B cell (primary cell): ENCODE measurements at regions of chr11 and their contacts with region 1.

Region 1: DNA sequence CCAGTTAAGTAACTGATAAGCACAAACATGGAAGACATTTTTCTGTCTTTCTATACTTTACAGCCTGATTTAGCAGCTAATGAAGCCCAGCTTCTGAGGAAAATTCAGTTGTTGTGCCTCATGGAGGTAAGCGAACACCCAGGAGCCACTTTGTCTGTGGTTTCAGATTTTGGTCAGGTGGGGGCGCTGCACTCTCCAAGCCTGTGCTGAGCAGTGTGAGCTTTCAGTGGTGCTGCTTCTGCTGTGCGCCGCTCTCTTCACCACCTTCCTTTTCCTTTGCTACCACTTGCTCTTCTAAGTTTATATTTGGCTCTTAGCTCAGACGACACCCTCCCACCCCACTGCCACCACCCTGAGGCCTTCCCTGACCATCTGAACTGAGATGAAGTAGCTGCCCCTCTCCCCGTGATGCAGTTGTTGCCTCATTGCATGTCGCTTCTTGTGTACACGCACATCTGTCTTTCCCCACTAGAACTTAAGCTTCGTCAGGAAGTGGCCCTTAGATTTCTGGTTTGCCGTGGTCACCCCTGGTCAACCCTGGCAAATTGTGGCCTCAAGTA is 14.0 kb downstream of the PSMD13 start:
- DNase-seq: peak; percentile 84
- ATAC-seq: peak; percentile 89
- H3K4me3 ChIP-seq: no peak overlapping the region
- H3K4me3 Mint-ChIP-seq: no peak overlapping the region
- H3K27ac ChIP-seq: no peak overlapping the region
- H3K27ac Mint-ChIP-seq: no peak overlapping the region
- H3K4me1 ChIP-seq: peaks cover 0 to 5% of the 10 kb centered on the region in 2 donors
- H3K4me1 Mint-ChIP-seq: peaks cover 7% of the 10 kb centered on the region
- H3K27me3 ChIP-seq: no peaks in the 10 kb centered on the region
- H3K27me3 Mint-ChIP-seq: no peaks in the 10 kb centered on the region
- CTCF ChIP-seq: peak; percentile 79

Region 2: GRCh38 chr11:269146-269890 is 18.5 kb after region 1 on chr11:
- CTCF ChIA-PET with region 1: interaction called, 49 read pairs
- POLR2A ChIA-PET with region 1: interaction called, 7 read pairs
- intact Hi-C with region 1: loop called (anchors 2 kb)
- DNase-seq: peak; percentile 96
- ATAC-seq: peak; percentile 66
- H3K4me3 ChIP-seq: peak overlapping the region; percentile 62 to 85 (median 72)
- H3K4me3 Mint-ChIP-seq: peak overlapping the region; percentile 91
- H3K27ac ChIP-seq: peak overlapping the region; percentile 96 to 98
- H3K27ac Mint-ChIP-seq: peak overlapping the region; percentile 94
- H3K4me1 ChIP-seq: peaks cover 25 to 32% of the 10 kb centered on the region in 2 donors
- H3K4me1 Mint-ChIP-seq: peaks cover 34% of the 10 kb centered on the region
- H3K27me3 ChIP-seq: no peaks in the 10 kb centered on the region
- H3K27me3 Mint-ChIP-seq: no peaks in the 10 kb centered on the region
- CTCF ChIP-seq: peak; percentile 33

Region 3: GRCh38 chr11:299951-300735 is 49.3 kb after region 1 on chr11:
- CTCF ChIA-PET with region 1: interaction called, 51 read pairs
- POLR2A ChIA-PET with region 1: no interaction called
- intact Hi-C with region 1: no loop called
- DNase-seq: no peak
- ATAC-seq: peak; percentile 28
- H3K4me3 ChIP-seq: no peak overlapping the region
- H3K4me3 Mint-ChIP-seq: no peak overlapping the region
- H3K27ac ChIP-seq: no peak overlapping the region
- H3K27ac Mint-ChIP-seq: peak overlapping the region; percentile 26
- H3K4me1 ChIP-seq: peaks cover 15 to 27% of the 10 kb centered on the region in 2 donors
- H3K4me1 Mint-ChIP-seq: peaks cover 28% of the 10 kb centered on the region
- H3K27me3 ChIP-seq: peaks cover 0 to 15% (median 1%) of the 10 kb centered on the region in 4 experiments
- H3K27me3 Mint-ChIP-seq: peaks cover 7% of the 10 kb centered on the region
- CTCF ChIP-seq: no peak

Region 4: GRCh38 chr11:326842-327580 is 76.2 kb after region 1 on chr11:
- CTCF ChIA-PET with region 1: interaction called, 23 read pairs
- POLR2A ChIA-PET with region 1: no interaction called
- intact Hi-C with region 1: no loop called
- DNase-seq: peak; percentile 87
- ATAC-seq: peak; percentile 74
- H3K4me3 ChIP-seq: peak overlapping the region in 4 of 5 experiments; percentile 21 to 34 (median 26)
- H3K4me3 Mint-ChIP-seq: peak overlapping the region; percentile 66
- H3K27ac ChIP-seq: peak overlapping the region; percentile 95 to 96
- H3K27ac Mint-ChIP-seq: peak overlapping the region; percentile 95
- H3K4me1 ChIP-seq: peaks cover 34 to 55% of the 10 kb centered on the region in 2 donors
- H3K4me1 Mint-ChIP-seq: peaks cover 54% of the 10 kb centered on the region
- H3K27me3 ChIP-seq: no peaks in the 10 kb centered on the region
- H3K27me3 Mint-ChIP-seq: no peaks in the 10 kb centered on the region
- CTCF ChIP-seq: no peak

Region 5: GRCh38 chr11:363948-364761 is 113.3 kb after region 1 on chr11:
- CTCF ChIA-PET with region 1: interaction called, 52 read pairs
- POLR2A ChIA-PET with region 1: interaction called, 3 read pairs
- intact Hi-C with region 1: loop called (anchors 2 kb)
- DNase-seq: peak; percentile 65
- ATAC-seq: peak; percentile 83
- H3K4me3 ChIP-seq: no peak overlapping the region
- H3K4me3 Mint-ChIP-seq: no peak overlapping the region
- H3K27ac ChIP-seq: no peak overlapping the region
- H3K27ac Mint-ChIP-seq: no peak overlapping the region
- H3K4me1 ChIP-seq: peaks cover 8 to 14% of the 10 kb centered on the region in 2 donors
- H3K4me1 Mint-ChIP-seq: peaks cover 11% of the 10 kb centered on the region
- H3K27me3 ChIP-seq: peaks cover 0 to 38% (median 15%) of the 10 kb centered on the region in 4 experiments
- H3K27me3 Mint-ChIP-seq: peaks cover 24% of the 10 kb centered on the region
- CTCF ChIP-seq: peak; percentile 69

Region 6: DNA sequence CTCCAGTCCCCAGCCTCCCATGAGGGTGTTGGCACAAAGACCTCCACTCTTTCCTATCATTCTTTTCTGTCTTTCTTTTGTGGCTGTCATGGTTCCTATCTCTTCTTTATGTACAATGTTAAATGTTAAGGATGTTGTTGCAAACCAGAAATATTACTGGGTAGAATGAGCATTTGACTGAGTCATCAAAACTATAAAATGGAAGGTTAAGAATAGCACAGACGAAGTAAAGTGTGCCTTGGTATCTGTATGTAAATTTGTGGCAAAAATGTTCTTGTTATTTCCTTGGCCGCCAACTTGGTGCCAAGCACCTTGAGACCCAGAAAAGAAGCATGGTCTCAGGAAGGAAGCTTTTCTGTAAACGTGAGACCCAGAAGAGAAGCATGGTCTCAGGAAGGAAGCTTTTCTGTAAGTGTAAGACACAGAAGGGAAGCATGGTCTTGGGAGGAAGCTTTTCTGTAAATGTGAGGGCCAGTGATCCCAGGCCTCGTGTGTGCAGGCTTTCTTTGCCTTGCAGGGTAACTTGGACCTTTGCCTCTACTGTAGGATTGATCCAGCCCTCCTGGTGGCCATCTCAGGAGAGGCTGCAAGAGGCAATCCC is 136.5 kb after region 1 on chr11:
- CTCF ChIA-PET with region 1: no interaction called
- POLR2A ChIA-PET with region 1: no interaction called
- intact Hi-C with region 1: no loop called
- DNase-seq: no peak
- ATAC-seq: no peak
- H3K4me3 ChIP-seq: no peak overlapping the region
- H3K4me3 Mint-ChIP-seq: no peak overlapping the region
- H3K27ac ChIP-seq: no peak overlapping the region
- H3K27ac Mint-ChIP-seq: no peak overlapping the region
- H3K4me1 ChIP-seq: no peaks in the 10 kb centered on the region
- H3K4me1 Mint-ChIP-seq: peaks cover 3% of the 10 kb centered on the region
- H3K27me3 ChIP-seq: peaks cover 0 to 4% (median 0%) of the 10 kb centered on the region in 4 experiments
- H3K27me3 Mint-ChIP-seq: peaks cover 3% of the 10 kb centered on the region
- CTCF ChIP-seq: no peak